Breast epithelium (tissue), 4 donors: ENCODE measurements at regions of chr2 and their contacts with region 1.

Region 1: DNA sequence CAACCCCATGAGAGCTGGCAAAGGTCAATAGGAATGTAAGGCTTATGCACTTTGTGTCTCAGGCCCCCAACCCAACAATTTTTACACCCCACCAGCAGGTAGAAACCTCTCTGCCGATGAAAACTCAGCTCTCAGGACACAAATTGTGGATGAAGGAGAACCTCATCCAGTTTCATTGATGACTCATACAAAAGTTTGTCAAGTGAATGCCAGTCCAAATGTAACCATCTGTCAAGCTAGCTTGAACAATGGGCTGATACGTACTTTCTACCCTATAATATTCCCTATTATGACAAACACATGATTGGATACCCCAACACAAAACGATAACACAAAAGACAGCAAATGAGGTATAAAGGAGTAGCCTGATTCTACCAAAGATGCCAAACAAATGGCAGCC is 321.2 kb upstream of the TMEFF2 start:
- DNase-seq: no peak
- H3K4me3 ChIP-seq: no peak overlapping the region
- H3K27ac ChIP-seq: no peak overlapping the region
- H3K4me1 ChIP-seq: no peaks in the 10 kb centered on the region
- H3K27me3 ChIP-seq: no peaks in the 10 kb centered on the region
- CTCF ChIP-seq: no peak
- POLR2A ChIP-seq: no peak

Region 2: DNA sequence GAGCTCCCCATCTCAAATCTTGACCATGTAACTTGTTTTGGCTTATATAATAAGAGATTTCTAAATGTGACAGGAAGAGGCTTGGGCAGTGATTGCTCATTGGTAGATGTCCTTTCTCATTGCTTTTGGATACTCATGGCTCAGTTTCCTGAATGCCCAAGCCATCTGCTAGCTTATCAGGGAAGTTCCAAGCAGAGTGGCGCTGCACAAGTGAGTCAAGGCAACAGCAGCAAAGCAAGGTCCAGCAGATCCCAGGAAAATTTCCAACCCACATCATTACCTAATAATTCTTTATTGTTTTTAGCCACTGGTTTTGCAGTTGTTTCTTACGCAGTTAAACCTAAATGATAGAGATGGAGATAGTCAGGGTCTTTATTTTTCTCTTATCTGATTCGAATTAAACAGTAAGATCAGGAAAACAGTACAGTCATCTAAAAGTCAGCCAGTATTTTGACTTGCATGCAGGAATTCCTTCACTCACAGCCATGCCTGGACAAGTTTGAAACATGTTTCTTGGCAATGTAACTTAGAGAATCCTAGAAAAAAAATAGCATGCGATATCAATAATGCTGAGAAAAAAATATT is 28.5 kb after region 1 on chr2:
- intact Hi-C with region 1: no loop called
- DNase-seq: no peak
- H3K4me3 ChIP-seq: no peak overlapping the region
- H3K27ac ChIP-seq: no peak overlapping the region
- H3K4me1 ChIP-seq: no peaks in the 10 kb centered on the region
- H3K27me3 ChIP-seq: no peaks in the 10 kb centered on the region
- CTCF ChIP-seq: no peak
- POLR2A ChIP-seq: no peak

Region 3: GRCh38 chr2:192555740-192556139 is 39.8 kb after region 1 on chr2:
- intact Hi-C with region 1: loop called (anchors 2 kb)
- DNase-seq: no peak
- H3K4me3 ChIP-seq: no peak overlapping the region
- H3K27ac ChIP-seq: no peak overlapping the region
- H3K4me1 ChIP-seq: no peaks in the 10 kb centered on the region
- H3K27me3 ChIP-seq: no peaks in the 10 kb centered on the region
- CTCF ChIP-seq: no peak
- POLR2A ChIP-seq: no peak

Region 4: DNA sequence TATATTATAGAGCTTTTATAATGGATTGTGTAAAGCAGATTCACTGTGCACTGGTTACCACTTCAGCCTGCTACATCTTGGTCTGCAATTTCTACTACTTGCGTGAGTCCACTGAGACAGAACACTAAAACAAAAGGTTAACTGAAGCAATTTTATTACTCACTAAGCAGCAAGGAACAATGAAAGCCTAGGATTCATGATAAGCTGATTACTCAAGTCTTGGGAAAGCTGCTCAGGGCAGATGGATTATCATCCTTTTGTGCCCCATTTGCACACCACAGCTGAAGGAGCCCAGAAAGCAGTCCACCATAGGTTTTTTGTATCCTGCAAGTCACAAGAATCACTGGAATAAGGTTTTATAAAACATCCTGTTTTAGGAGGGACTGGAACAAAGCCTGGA is 894.0 kb after region 1 on chr2:
- intact Hi-C with region 1: no loop called
- DNase-seq: no peak
- H3K4me3 ChIP-seq: no peak overlapping the region
- H3K27ac ChIP-seq: no peak overlapping the region
- H3K4me1 ChIP-seq: no peaks in the 10 kb centered on the region
- H3K27me3 ChIP-seq: no peaks in the 10 kb centered on the region
- CTCF ChIP-seq: no peak
- POLR2A ChIP-seq: no peak